ENCODE measurements at regions of chr14 and their contacts with region 1.

Region 1: DNA sequence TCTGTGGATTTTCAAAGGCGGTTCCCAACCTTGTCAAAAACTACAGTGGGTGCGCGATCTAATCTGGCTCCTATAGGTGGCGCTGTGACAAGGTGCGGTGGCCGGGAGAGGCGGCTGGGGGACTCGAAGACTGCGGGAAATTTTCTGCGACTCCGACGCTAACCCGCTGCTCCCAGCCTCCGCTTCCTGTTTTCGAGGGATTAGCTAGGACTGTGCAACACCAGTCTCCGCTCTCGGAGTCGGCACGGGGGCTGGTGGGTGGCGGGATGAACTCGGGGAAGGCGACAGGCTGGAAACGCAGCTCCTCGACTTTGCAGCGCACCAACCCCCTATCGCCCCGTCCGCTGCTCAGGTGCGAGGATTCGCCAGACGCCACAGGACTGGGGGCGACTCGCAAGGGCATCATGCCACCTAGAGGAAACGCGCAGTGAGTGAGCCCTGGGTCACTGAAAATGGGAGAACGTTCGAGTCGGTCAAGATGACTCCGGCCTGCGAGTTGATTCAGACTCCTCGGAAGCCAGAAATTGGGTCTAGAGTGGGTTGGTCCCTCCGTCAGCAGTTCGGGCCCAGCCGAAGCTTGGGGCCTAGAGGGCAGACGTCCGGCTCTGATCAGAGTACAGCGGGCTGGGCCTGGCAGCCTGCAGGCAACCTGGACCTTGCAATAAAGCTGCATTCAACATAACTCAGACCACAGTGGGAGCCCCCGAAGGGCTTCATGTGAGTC is 5.5 kb upstream of the PAX9 start:
- DNase-seq: no peak
- ATAC-seq: peak; percentile 68
- H3K4me3 ChIP-seq: no peak overlapping the region
- H3K27ac ChIP-seq: no peak overlapping the region
- H3K4me1 ChIP-seq: no peaks in the 10 kb centered on the region
- H3K27me3 ChIP-seq: peaks cover 5 to 13% of the 10 kb centered on the region in 2 experiments; a peak in 3 of 4 replicates
- CTCF ChIP-seq: peak; percentile 17 to 38 (median 25); a peak in 1 of 6 replicates
- EP300 ChIP-seq: no peak
- POLR2A ChIP-seq: no peak
- RAD21 ChIP-seq: no peak

Region 2: DNA sequence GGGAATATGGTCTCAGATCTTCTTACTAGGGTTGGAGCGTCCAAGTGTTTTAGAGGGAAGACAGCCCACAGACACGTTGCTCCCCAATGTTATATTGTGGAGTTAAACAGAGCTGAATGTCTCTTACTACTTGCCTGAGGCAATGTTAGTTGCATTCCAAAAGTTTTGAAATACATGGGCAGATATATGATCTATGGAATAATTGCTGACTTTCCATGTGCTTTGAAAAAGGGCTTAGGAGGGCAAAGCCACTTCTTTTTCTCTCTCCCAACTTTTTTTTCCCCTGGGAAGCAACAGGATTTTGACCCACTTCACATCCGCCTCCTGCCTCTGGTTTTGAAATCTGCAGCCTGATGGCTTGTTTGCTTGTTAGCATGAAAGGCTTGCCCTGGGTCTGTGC is 28.1 kb before region 1 on chr14:
- CTCF ChIA-PET with region 1: no interaction called
- POLR2A ChIA-PET with region 1: no interaction called
- RAD21 ChIA-PET with region 1: no interaction called
- SMC1A ChIA-PET with region 1: no interaction called
- in situ Hi-C with region 1: no loop called
- intact Hi-C with region 1: no loop called
- DNase-seq: no peak
- ATAC-seq: no peak
- H3K4me3 ChIP-seq: no peak overlapping the region
- H3K27ac ChIP-seq: no peak overlapping the region
- H3K4me1 ChIP-seq: no peaks in the 10 kb centered on the region
- H3K27me3 ChIP-seq: no peaks in the 10 kb centered on the region
- CTCF ChIP-seq: no peak
- EP300 ChIP-seq: no peak
- POLR2A ChIP-seq: no peak
- RAD21 ChIP-seq: no peak

Region 3: GRCh38 chr14:36683083-36683740 is 27.1 kb after region 1 on chr14:
- CTCF ChIA-PET with region 1: no interaction called
- POLR2A ChIA-PET with region 1: no interaction called
- RAD21 ChIA-PET with region 1: no interaction called
- SMC1A ChIA-PET with region 1: no interaction called
- in situ Hi-C with region 1: no loop called
- intact Hi-C with region 1: no loop called
- DNase-seq: no peak
- ATAC-seq: no peak
- H3K4me3 ChIP-seq: no peak overlapping the region
- H3K27ac ChIP-seq: no peak overlapping the region
- H3K4me1 ChIP-seq: no peaks in the 10 kb centered on the region
- H3K27me3 ChIP-seq: no peaks in the 10 kb centered on the region
- CTCF ChIP-seq: no peak
- EP300 ChIP-seq: no peak
- POLR2A ChIP-seq: no peak
- RAD21 ChIP-seq: no peak

Region 4: DNA sequence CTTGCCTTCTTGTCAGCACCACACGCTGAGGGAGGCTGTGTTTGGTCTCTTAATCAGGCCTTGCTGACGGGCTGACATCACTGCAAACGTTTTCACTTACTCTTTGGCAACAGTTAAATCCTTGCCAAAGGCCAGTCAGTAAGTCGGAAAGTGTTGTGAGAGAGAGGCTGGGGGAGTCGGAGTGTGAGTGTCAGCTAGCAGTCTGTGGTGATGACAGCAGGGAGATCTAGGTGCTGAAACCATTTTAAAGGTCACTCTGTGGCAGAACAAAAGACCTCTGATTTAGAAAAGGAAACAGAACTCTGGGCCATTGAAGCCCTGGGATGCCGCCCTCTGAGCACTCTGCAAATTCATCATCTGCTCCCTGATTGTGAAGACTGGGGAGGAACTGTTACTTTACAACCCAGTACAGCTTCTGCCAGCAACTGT is 149.0 kb after region 1 on chr14:
- CTCF ChIA-PET with region 1: no interaction called
- POLR2A ChIA-PET with region 1: no interaction called
- RAD21 ChIA-PET with region 1: no interaction called
- SMC1A ChIA-PET with region 1: no interaction called
- in situ Hi-C with region 1: no loop called
- intact Hi-C with region 1: no loop called
- DNase-seq: no peak
- ATAC-seq: no peak; the same call in 1 of the 3 replicates
- H3K4me3 ChIP-seq: no peak overlapping the region
- H3K27ac ChIP-seq: no peak overlapping the region
- H3K4me1 ChIP-seq: no peaks in the 10 kb centered on the region
- H3K27me3 ChIP-seq: no peaks in the 10 kb centered on the region
- CTCF ChIP-seq: no peak
- EP300 ChIP-seq: no peak
- POLR2A ChIP-seq: no peak
- RAD21 ChIP-seq: no peak

Region 5: GRCh38 chr14:36936013-36936678 is 280.0 kb after region 1 on chr14:
- CTCF ChIA-PET with region 1: interaction called, 29 read pairs
- POLR2A ChIA-PET with region 1: no interaction called
- RAD21 ChIA-PET with region 1: interaction called, 13 read pairs
- SMC1A ChIA-PET with region 1: interaction called, 9 read pairs
- in situ Hi-C with region 1: loop called (anchors 10 kb)
- intact Hi-C with region 1: no loop called
- DNase-seq: no peak
- ATAC-seq: no peak
- H3K4me3 ChIP-seq: no peak overlapping the region
- H3K27ac ChIP-seq: no peak overlapping the region
- H3K4me1 ChIP-seq: no peaks in the 10 kb centered on the region
- H3K27me3 ChIP-seq: no peaks in the 10 kb centered on the region
- CTCF ChIP-seq: no peak
- EP300 ChIP-seq: no peak
- POLR2A ChIP-seq: no peak
- RAD21 ChIP-seq: no peak

Region 6: DNA sequence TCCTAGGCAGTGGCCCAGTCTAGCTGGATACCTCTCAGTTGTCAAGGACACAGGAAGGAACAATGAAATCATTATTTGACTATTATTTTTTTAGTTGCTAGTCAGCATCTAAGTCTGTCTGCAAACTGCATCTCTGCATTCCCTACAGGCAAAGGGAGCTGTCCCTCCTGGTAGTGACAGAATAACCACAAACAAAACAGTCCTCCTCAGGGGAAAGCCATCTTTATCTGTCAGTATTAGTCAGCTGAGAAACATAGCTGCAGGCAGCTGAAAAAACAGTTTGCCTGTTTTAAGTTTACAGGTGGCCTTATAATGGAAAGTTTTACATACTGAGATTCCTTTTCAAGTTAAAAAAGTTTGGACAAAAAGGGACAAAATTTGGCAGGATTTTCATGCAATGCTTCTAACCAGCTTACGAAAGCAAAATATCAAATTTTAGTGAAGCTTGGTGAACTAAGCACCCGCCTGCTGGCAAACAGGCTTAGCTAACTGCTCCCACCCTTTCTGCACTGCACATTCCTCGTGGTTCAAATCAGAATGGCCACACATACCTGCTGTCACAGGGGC is 486.8 kb after region 1 on chr14:
- CTCF ChIA-PET with region 1: no interaction called
- POLR2A ChIA-PET with region 1: no interaction called
- RAD21 ChIA-PET with region 1: no interaction called
- SMC1A ChIA-PET with region 1: no interaction called
- in situ Hi-C with region 1: loop called (anchors 10 kb)
- intact Hi-C with region 1: no loop called
- DNase-seq: no peak
- ATAC-seq: no peak
- H3K4me3 ChIP-seq: no peak overlapping the region
- H3K27ac ChIP-seq: no peak overlapping the region
- H3K4me1 ChIP-seq: no peaks in the 10 kb centered on the region
- H3K27me3 ChIP-seq: no peaks in the 10 kb centered on the region
- CTCF ChIP-seq: no peak
- EP300 ChIP-seq: no peak
- POLR2A ChIP-seq: no peak
- RAD21 ChIP-seq: no peak